Ascending aorta (tissue), 2 donors: ENCODE measurements at regions of chr20 and their contacts with region 1.

Region 1: DNA sequence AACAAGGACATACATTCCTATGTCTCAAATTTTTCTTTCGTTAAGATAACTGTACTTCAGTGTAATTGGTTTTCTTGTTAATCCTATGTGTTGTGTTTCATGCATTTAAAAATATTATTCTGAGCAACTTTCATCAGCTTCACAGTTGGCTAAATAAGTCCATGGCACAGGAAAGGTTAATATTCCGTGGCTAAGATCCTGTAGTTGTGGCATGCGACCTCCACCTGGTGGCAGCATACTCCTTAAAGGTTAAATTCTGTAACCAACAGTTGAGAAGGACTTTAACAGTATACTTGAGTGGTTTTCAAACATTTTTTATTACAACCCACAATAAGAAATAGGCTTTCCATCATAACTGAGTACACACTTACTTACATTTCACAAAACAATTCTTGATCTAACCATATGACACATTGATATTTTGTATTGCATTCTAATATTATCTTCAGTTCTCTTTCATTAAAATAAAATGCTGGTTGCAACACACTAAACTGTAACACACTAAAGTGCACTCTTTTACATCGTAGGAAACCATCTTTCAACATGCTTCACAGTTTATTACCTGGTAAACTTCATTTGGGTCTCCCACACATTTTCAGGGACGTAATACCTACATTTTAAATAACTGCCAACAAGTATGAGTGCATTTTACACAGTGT is 118.3 kb downstream of the SLX4IP start:
- DNase-seq: peak in 1 of 2 donors; percentile 89
- H3K4me3 ChIP-seq: no peak overlapping the region
- H3K27ac ChIP-seq: no peak overlapping the region
- H3K4me1 ChIP-seq: peaks cover 3 to 47% of the 10 kb centered on the region in 2 donors
- H3K27me3 ChIP-seq: no peaks in the 10 kb centered on the region
- CTCF ChIP-seq: peak; percentile 69 to 83 (median 72)

Region 2: GRCh38 chr20:10453241-10453640 is 100.2 kb before region 1 on chr20:
- intact Hi-C with region 1: no loop called
- DNase-seq: no peak
- H3K4me3 ChIP-seq: no peak overlapping the region
- H3K27ac ChIP-seq: no peak overlapping the region
- H3K4me1 ChIP-seq: no peaks in the 10 kb centered on the region
- H3K27me3 ChIP-seq: no peaks in the 10 kb centered on the region
- CTCF ChIP-seq: no peak

Region 3: DNA sequence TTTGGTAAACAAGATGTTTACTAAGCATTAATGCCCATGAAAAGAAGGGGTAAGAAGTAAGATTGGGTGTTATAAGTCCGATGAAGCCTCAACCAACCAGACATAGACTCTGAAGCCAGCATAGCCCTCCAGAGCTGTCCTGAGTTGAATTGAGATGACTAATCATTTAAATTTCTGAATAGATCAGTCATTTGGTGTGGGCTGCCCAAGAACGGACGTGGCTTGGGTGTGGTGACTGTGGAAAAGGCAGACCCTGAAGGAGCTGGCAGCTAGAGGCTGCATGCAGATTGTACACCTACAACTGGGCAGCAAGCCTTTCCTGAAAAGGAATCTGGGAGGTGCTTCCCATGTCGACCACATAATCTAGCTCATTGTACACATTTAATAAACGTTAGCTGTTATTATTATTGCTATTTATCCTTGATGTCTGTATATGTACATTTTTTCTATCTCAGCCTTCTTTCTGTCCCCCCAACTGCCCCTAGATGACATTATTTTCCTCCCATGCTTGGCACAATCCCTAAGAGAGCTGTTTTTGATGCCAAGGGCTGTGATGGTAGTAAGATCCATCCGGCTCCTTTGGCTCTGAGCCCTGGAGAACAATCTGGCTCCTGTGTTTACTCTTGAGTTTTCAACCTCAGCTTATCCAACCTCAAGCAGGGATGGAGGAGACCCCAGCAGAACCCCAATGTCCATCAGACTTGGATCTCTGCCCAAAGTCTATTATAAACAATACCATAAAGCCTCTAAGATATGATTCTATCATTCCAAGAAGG is 177.9 kb after region 1 on chr20:
- intact Hi-C with region 1: loop called (anchors 10 kb)
- DNase-seq: no peak
- H3K4me3 ChIP-seq: no peak overlapping the region
- H3K27ac ChIP-seq: peak overlapping the region in 1 of 2 donors; percentile 16
- H3K4me1 ChIP-seq: peaks cover 0 to 5% of the 10 kb centered on the region in 2 donors
- H3K27me3 ChIP-seq: no peaks in the 10 kb centered on the region
- CTCF ChIP-seq: no peak

Region 4: DNA sequence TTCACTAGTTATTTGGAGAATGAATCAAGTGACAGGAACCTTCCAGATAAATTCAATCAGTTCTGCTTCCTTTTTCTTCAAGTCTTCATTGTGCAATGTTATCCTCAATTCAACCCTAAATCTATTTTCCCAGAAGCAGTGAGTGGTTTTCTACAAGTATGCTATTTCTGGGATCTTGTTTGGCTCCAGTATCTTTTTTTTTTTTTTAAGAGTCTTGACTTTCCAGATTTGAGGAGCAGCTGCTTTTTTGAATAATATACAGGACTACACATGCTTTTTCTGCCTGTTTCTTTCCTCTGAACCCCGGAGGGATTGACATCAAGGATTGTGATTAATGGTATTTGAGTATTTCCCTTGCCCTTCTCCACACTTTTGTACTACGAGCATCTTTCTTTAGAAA is 459.5 kb after region 1 on chr20:
- intact Hi-C with region 1: loop called (anchors 10 kb)
- DNase-seq: no peak
- H3K4me3 ChIP-seq: no peak overlapping the region
- H3K27ac ChIP-seq: peak overlapping the region in 1 of 2 donors; percentile 37
- H3K4me1 ChIP-seq: peaks cover 0 to 7% of the 10 kb centered on the region in 2 donors
- H3K27me3 ChIP-seq: no peaks in the 10 kb centered on the region
- CTCF ChIP-seq: no peak

Region 5: GRCh38 chr20:11274141-11274594 is 720.7 kb after region 1 on chr20:
- intact Hi-C with region 1: loop called (anchors 1 kb)
- DNase-seq: peak in 1 of 2 donors; percentile 69
- H3K4me3 ChIP-seq: no peak overlapping the region
- H3K27ac ChIP-seq: no peak overlapping the region
- H3K4me1 ChIP-seq: peaks cover 0 to 3% of the 10 kb centered on the region in 2 donors
- H3K27me3 ChIP-seq: no peaks in the 10 kb centered on the region
- CTCF ChIP-seq: peak; percentile 58 to 77 (median 58)